ENCODE measurements at regions of chr3 and their contacts with region 1.

Region 1: GRCh38 chr3:63993653-63994079 is 29.6 kb downstream of the PSMD6 start:
- H3K4me3 ChIP-seq: no peak overlapping the region
- H3K27ac ChIP-seq: no peak overlapping the region
- H3K4me1 ChIP-seq: no peaks in the 10 kb centered on the region
- CTCF ChIP-seq: peak; percentile 36

Region 2: GRCh38 chr3:63349583-63350521 is 643.8 kb before region 1 on chr3:
- CTCF ChIA-PET with region 1: interaction called, 13 read pairs
- POLR2A ChIA-PET with region 1: no interaction called
- H3K4me3 ChIP-seq: no peak overlapping the region
- H3K27ac ChIP-seq: no peak overlapping the region
- H3K4me1 ChIP-seq: no peaks in the 10 kb centered on the region
- CTCF ChIP-seq: 0 out of 2 replicates have a peak, but pooled peaks have one; percentile 16

Region 3: GRCh38 chr3:63762934-63763550 is 230.6 kb before region 1 on chr3:
- CTCF ChIA-PET with region 1: no interaction called
- POLR2A ChIA-PET with region 1: no interaction called
- H3K4me3 ChIP-seq: no peak overlapping the region
- H3K27ac ChIP-seq: no peak overlapping the region
- H3K4me1 ChIP-seq: no peaks in the 10 kb centered on the region
- CTCF ChIP-seq: no peak

Region 4: GRCh38 chr3:63961891-63962290 is 31.8 kb before region 1 on chr3:
- CTCF ChIA-PET with region 1: interaction called, 17 read pairs
- POLR2A ChIA-PET with region 1: no interaction called
- H3K4me3 ChIP-seq: no peak overlapping the region
- H3K27ac ChIP-seq: no peak overlapping the region
- H3K4me1 ChIP-seq: peaks cover 9% of the 10 kb centered on the region
- CTCF ChIP-seq: no peak

Region 5: DNA sequence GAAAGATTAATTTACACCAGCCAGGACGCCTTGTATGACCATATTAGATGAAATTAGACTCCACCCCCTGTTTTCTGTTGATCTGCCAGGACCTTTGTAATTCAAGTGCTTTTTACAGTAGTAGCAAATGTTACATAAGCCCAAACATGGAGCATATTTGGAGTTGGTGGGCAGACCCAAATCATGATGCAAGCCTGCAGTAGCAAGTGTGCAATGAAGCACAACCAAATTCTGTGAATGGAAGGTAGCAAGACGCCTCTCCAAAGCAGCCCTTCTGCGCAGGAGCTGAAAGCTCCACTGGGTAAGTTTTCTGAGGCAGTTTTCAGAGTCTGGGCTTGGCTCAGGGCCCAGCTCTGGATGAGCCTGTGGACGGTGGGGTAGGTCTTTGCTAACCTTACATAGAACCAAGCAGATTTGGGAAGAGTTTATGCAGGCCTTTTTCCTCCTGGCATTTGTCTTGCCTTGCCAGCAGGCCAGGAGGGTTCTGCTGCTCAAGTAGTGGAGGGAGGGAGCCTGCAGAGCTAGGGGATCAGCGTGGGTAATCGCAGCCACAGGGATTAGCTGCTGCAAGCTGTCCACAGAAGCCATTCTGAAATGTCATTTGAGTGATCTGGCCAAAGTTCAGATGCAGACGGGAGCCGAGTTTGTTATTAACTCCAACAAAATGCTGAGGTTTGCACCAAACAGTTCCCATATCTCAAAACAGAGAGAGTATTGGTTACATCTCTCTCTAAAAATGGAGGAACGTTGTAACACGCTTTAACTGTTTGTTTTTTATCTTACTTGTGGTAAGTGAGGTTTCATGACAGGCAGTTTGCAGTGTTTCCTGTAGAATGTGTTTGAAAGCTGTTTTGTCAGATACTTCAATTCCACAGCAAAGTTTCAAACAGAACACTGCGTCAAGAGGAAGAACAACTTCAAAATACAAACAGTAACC is 25.7 kb before region 1 on chr3:
- CTCF ChIA-PET with region 1: interaction called, 10 read pairs
- POLR2A ChIA-PET with region 1: no interaction called
- H3K4me3 ChIP-seq: peak overlapping the region; percentile 11; the same call in 1 of the 2 replicates
- H3K27ac ChIP-seq: peak overlapping the region; percentile 11; the same call in 1 of the 2 replicates
- H3K4me1 ChIP-seq: peaks cover 30% of the 10 kb centered on the region
- CTCF ChIP-seq: no peak

Measured in HEK293 (cell line).